Activated B cell treated with CpG ODN at 0.5 μM for 24 hours (primary cell): ENCODE measurements at regions of chrX and their contacts with region 1.

Region 1: DNA sequence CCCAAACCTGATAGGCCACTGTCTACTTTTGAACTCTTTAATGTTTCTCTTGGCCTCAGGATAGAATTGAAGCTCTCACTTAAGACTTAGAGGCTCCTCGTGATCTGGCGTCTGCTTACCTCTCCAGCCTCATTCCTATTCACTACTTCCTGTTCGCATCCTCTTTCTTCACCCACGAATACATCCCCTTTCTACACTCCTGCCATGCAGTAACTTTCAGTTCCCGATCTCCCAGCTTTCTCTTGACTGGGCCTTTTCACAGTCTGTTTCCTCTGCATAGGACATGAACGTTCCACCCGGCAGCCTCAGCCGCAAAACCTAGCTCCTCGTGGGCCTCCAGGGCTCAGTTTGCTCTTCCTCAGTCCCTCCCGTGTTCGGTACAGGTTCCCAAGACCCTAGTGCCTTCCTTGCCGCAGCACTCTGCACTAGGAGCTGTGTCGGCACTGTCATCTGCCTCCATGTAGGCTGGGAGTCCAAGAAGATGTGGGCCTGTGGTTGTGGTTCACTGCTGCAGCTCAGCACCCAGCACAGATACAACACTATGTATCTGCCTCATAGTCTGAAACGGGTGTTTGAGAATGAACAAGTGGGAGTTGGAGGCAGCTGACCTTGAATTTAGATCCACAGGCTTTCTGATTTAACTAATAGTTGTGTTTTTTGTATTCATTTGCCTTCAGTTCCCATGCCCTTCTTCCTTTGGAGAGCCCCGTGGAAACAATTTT is 15.8 kb downstream of the RPL39 start:
- DNase-seq: no peak
- ATAC-seq: peak; percentile 21
- H3K4me3 Mint-ChIP-seq: peak overlapping the region; percentile 28
- H3K27ac Mint-ChIP-seq: peak overlapping the region; percentile 85
- H3K4me1 Mint-ChIP-seq: peaks cover 27% of the 10 kb centered on the region
- H3K27me3 Mint-ChIP-seq: no peaks in the 10 kb centered on the region
- CTCF ChIP-seq: no peak

Region 2: DNA sequence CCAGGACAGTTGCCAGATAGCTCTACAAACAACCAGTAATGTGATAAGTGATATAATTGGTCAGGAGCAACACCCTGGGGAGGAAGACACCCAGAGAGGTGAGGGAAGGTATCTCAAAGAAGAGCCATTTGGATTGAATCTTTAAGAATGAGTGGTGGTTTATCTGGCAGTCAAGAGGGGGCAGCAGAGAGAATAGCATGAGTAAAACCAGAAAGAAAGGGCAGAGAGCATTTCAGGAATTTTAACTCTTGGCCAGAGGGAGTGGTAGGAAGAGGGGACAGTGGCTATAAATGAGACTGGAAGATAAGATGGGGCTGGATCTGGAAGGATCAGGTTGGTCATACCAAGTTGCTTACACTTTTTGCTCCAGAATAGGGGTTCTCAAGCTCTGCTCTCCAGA is 76.8 kb before region 1 on chrX:
- CTCF ChIA-PET with region 1: no interaction called
- POLR2A ChIA-PET with region 1: no interaction called
- intact Hi-C with region 1: loop called (anchors 2 kb)
- DNase-seq: no peak
- ATAC-seq: peak; percentile 19
- H3K4me3 Mint-ChIP-seq: no peak overlapping the region
- H3K27ac Mint-ChIP-seq: no peak overlapping the region
- H3K4me1 Mint-ChIP-seq: peaks cover 47% of the 10 kb centered on the region
- H3K27me3 Mint-ChIP-seq: no peaks in the 10 kb centered on the region
- CTCF ChIP-seq: no peak

Region 3: DNA sequence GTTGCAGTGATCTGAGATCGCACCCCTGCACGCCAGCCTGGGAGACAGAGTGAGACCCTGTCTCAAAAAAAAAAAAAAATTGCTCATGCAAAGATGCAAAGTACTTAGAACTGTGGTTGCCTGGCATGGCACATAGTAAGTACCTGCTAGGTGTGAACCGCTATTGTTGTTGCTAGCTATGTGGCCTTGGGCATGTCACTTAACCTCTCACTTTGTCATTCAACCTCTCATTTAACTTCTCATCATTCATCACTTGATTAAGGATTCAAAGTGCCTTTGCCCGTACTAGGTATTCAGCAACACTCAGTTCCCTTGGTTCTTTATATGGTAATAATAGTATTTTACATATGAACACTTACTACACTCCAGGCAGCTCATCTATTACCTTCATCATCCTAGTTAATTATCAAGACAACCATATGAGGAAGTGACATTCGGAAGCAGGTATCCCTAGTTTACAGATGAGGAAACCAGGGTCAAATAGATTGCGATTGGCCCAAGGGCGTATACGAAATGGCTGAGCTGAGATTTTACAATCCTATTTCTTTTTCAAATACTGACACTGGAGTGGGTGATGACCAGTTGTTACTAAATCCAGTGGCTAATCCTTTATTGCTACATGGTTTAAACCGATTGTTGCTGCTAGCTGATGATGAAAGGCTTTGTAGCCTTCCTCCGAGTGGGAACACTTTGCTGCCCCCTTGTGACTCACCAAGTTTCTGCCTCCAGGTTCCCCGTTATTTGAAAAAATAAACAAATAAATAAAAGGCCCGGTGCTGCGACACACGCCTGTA is 46.1 kb before region 1 on chrX:
- CTCF ChIA-PET with region 1: interaction called, 6 read pairs
- POLR2A ChIA-PET with region 1: interaction called, 4 read pairs
- intact Hi-C with region 1: loop called (anchors 1 kb)
- DNase-seq: peak; percentile 30
- ATAC-seq: peak; percentile 57
- H3K4me3 Mint-ChIP-seq: no peak overlapping the region
- H3K27ac Mint-ChIP-seq: no peak overlapping the region
- H3K4me1 Mint-ChIP-seq: peaks cover 2% of the 10 kb centered on the region
- H3K27me3 Mint-ChIP-seq: no peaks in the 10 kb centered on the region
- CTCF ChIP-seq: no peak

Region 4: DNA sequence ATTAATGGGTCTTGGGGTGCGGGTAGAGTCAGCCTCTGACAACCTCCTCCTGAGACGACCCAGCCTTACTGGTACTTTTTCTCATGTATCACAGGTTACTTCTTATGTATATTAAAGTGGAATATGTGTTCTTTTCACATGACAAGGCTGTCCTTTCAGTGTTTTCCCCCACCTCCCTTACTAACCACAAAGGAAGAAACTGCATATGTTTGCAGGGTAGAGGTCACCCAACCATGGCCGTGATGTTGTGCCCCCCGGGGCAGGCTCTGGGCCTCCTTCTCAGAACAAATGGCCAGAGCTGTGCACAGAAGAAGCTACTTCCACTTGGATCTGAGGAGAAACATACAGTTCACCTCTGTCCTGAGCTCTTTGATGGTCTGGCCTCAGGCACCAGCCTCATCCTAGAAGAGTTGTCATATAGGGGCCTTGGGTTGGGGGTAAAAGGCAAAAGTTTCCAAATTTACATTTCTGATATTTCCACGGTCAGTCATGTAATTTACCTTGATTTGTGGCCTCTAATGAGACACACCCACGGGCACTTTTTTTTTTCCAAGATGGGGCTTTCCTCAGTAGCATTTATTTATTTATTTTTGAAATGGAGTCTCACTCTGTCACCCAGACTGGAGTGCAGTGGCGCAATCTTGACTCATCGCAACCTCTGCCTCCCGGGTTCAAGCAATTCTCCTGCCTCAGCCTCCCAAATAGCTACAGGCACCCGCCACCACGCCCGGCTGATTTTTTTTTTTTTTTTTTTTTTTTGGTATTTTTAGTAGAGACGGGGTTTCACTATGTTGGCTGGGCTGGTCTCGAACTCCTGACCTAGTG is 15.4 kb before region 1 on chrX:
- CTCF ChIA-PET with region 1: interaction called, 6 read pairs
- POLR2A ChIA-PET with region 1: interaction called, 27 read pairs
- intact Hi-C with region 1: loop called (anchors 1 kb)
- DNase-seq: no peak
- ATAC-seq: peak; percentile 22
- H3K4me3 Mint-ChIP-seq: peak overlapping the region; percentile 82
- H3K27ac Mint-ChIP-seq: peak overlapping the region; percentile 86
- H3K4me1 Mint-ChIP-seq: peaks cover 74% of the 10 kb centered on the region
- H3K27me3 Mint-ChIP-seq: no peaks in the 10 kb centered on the region
- CTCF ChIP-seq: no peak

Region 5: GRCh38 chrX:119817130-119817690 is 41.5 kb after region 1 on chrX:
- CTCF ChIA-PET with region 1: no interaction called
- POLR2A ChIA-PET with region 1: no interaction called
- intact Hi-C with region 1: no loop called
- DNase-seq: no peak
- ATAC-seq: no peak
- H3K4me3 Mint-ChIP-seq: no peak overlapping the region
- H3K27ac Mint-ChIP-seq: no peak overlapping the region
- H3K4me1 Mint-ChIP-seq: peaks cover 12% of the 10 kb centered on the region
- H3K27me3 Mint-ChIP-seq: no peaks in the 10 kb centered on the region
- CTCF ChIP-seq: no peak